SK-N-SH (cell line): ENCODE measurements at regions of chr2 and their contacts with region 1.

Region 1: GRCh38 chr2:175275539-175275938 is 94.0 kb upstream of the ATP5MC3 start:
- DNase-seq: peak; percentile 37
- H3K4me3 ChIP-seq: no peak overlapping the region
- H3K27ac ChIP-seq: no peak overlapping the region
- H3K4me1 ChIP-seq: peaks cover 0 to 7% of the 10 kb centered on the region in 2 experiments; a peak in 1 of 4 replicates
- H3K27me3 ChIP-seq: no peaks in the 10 kb centered on the region; the same call in 1 of the 2 replicates
- CTCF ChIP-seq: no peak
- EP300 ChIP-seq: peak in 1 of 2 experiments; percentile 18; a peak in 1 of 4 replicates
- RAD21 ChIP-seq: no peak

Region 2: DNA sequence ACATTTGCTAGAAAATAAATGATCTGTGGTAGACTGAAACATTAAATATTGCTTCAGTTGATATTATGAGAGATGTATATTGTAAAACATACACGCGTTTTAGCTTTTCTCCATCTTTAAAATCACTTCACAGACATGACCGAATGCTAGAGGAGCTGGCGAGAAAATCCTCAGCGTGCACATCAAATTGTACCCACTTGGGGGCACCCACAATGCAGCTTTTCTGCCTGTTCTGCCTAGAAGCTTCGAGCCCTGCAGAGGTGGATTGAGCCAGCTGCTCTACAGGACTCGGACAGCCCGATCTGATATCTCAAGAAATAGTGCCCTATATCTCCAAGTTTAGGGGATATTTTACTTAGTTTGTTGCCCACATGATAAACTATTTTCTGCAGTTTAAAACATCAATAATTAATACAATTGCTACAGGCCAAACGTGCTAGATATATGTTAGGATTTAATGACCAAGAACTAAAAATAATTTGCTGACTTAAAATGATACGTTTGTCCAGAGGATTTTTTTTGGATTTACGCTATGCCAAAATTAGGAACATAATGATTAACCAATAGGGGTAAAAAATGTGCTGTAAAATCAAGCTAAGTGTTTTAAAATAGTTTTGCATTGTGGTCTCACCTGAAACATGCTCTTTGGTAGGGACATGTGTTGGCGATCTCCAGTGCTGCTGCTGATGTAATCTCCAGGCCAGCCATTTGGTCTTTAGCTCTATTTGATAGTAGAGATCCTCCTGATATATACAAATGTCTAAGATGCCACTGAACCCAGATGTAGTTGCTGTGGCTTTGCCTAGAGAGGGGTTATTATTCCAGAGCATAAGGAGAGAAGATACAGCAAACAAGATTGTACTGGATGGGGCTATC is 71.7 kb before region 1 on chr2:
- CTCF ChIA-PET with region 1: interaction called, 14 read pairs
- POLR2A ChIA-PET with region 1: no interaction called
- DNase-seq: peak; percentile 56
- H3K4me3 ChIP-seq: peak overlapping the region in 1 of 2 experiments; percentile 26; a peak in 1 of 4 replicates
- H3K27ac ChIP-seq: no peak overlapping the region
- H3K4me1 ChIP-seq: peaks cover 0 to 8% of the 10 kb centered on the region in 2 experiments; a peak in 2 of 4 replicates
- H3K27me3 ChIP-seq: no peaks in the 10 kb centered on the region
- CTCF ChIP-seq: peak; percentile 67
- EP300 ChIP-seq: peak in 1 of 2 experiments; percentile 18; a peak in 1 of 4 replicates
- RAD21 ChIP-seq: peak; percentile 73

Region 3: DNA sequence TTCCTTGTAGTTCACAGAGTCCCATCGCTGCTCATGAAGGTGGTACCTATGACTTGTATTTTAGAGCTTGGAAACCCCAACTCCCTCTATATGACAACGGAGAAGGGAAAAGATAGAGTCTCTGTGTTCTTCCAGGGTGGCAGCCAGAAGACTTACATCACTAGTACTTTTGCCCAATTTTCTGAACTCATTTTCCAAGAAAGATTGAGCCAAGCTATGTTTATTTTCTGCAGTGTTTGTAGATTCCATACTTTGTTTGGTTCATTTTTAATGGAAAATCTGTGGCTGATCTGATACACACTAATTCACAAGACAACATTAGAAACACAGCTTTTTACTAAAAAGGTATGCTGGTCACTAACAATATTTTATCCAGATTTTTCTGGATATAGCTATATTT is 33.8 kb before region 1 on chr2:
- CTCF ChIA-PET with region 1: no interaction called
- POLR2A ChIA-PET with region 1: no interaction called
- DNase-seq: no peak
- H3K4me3 ChIP-seq: no peak overlapping the region
- H3K27ac ChIP-seq: no peak overlapping the region
- H3K4me1 ChIP-seq: no peaks in the 10 kb centered on the region
- H3K27me3 ChIP-seq: 0 out of 2 replicates have a peak, but pooled peaks cover 3% of the 10 kb centered on the region
- CTCF ChIP-seq: no peak
- EP300 ChIP-seq: no peak
- RAD21 ChIP-seq: no peak